ENCODE measurements at regions of chr21 and their contacts with region 1.

Region 1: DNA sequence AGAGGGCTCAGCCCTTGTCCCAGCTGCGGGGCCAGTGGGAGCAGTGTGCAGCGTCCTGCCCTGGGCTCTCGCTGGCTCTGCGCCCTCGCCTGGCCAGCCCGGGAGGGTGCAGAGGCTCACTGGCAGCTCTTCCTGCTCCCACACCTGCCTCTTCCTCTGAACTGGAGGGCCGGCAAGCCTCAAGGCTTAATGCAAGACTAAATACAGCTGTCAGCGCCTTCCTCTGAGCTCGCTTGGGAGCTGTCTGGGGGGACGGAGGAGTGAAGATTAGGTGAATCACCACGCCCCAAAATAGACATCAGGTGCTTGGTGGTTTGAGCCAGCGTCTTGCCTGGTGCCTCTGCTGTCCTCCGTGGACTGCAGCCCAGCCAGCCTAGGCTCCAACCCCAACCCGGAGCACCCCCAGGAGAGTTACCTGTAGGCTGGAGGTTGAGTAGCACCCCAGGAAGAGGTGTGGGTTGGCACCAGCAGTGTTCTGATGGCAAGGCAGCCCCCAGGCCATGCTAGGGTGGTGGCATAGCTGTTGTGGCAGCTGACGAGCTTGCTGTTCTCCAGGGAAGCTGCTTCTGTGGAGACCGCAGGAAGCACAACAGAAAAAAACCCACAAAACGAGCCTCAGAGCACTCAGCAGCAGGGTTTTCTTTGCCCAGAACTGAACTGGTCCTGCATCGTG is 36.9 kb downstream of the UMODL1 start:
- DNase-seq: peak; percentile 75
- ATAC-seq: peak; percentile 99
- H3K4me3 Mint-ChIP-seq: no peak overlapping the region
- H3K27ac Mint-ChIP-seq: no peak overlapping the region
- H3K4me1 Mint-ChIP-seq: peaks cover 5% of the 10 kb centered on the region
- H3K27me3 Mint-ChIP-seq: no peaks in the 10 kb centered on the region
- CTCF ChIP-seq: peak; percentile 90

Region 2: DNA sequence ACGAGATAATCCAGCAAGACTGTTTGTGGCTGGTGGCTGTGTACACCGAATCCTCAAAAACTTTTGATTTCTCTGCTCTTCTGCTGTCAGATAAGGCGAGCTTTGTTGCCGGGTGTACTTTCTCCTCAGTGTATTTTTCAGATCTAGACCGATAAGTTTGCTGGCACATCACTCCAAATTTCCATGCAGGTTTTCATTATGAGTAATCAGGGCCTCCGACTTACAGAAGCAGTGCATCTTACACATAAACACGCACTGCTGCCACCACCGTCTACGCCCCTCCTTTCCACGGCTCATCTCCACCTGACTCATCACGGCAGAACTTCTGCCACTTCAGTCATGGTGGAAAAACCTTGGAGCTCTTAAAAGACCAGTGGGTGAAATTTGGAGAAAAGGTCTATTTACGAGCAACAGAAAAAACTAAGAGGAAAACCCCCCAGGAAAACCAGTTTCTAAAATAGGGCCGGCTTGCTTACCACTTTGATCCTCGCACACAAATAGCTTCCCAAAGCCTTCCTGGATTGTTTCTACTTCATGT is 105.5 kb before region 1 on chr21:
- CTCF ChIA-PET with region 1: interaction called, 21 read pairs
- POLR2A ChIA-PET with region 1: no interaction called
- intact Hi-C with region 1: loop called (anchors 5 kb)
- DNase-seq: peak; percentile 87
- ATAC-seq: peak; percentile 90
- H3K4me3 Mint-ChIP-seq: peak overlapping the region; percentile 2
- H3K27ac Mint-ChIP-seq: peak overlapping the region; percentile 88
- H3K4me1 Mint-ChIP-seq: peaks cover 54% of the 10 kb centered on the region
- H3K27me3 Mint-ChIP-seq: no peaks in the 10 kb centered on the region
- CTCF ChIP-seq: no peak

Region 3: GRCh38 chr21:42062236-42063022 is 45.6 kb before region 1 on chr21:
- CTCF ChIA-PET with region 1: interaction called, 16 read pairs
- POLR2A ChIA-PET with region 1: no interaction called
- intact Hi-C with region 1: no loop called
- DNase-seq: peak; percentile 95
- ATAC-seq: peak; percentile 68
- H3K4me3 Mint-ChIP-seq: peak overlapping the region; percentile 71
- H3K27ac Mint-ChIP-seq: peak overlapping the region; percentile 95
- H3K4me1 Mint-ChIP-seq: peaks cover 44% of the 10 kb centered on the region
- H3K27me3 Mint-ChIP-seq: no peaks in the 10 kb centered on the region
- CTCF ChIP-seq: no peak

Region 4: DNA sequence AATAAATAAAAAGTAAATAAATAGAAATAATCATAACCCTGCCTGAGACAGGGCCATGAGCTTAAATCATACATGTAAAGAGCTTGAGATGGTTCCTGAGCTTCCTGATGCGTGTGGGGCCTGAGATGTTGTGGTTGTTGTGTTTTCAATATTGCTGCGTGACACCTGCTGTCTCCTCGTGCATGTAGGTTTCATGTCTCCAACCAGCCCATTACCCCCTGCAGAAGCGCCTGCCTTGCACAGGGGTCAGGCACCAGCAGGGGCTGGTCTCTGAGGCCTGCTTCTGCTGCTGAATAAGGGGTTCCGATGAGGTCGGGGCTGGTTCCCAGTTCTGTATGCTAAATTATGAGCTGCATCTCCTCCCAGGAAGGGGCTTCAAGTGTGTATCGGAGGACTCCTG is 21.0 kb before region 1 on chr21:
- CTCF ChIA-PET with region 1: interaction called, 16 read pairs
- POLR2A ChIA-PET with region 1: no interaction called
- intact Hi-C with region 1: no loop called
- DNase-seq: no peak
- ATAC-seq: no peak
- H3K4me3 Mint-ChIP-seq: no peak overlapping the region
- H3K27ac Mint-ChIP-seq: no peak overlapping the region
- H3K4me1 Mint-ChIP-seq: peaks cover 11% of the 10 kb centered on the region
- H3K27me3 Mint-ChIP-seq: no peaks in the 10 kb centered on the region
- CTCF ChIP-seq: no peak

Region 5: GRCh38 chr21:42164064-42164789 is 56.2 kb after region 1 on chr21:
- CTCF ChIA-PET with region 1: no interaction called
- POLR2A ChIA-PET with region 1: no interaction called
- intact Hi-C with region 1: no loop called
- DNase-seq: peak; percentile 78
- ATAC-seq: peak; percentile 66
- H3K4me3 Mint-ChIP-seq: no peak overlapping the region
- H3K27ac Mint-ChIP-seq: no peak overlapping the region
- H3K4me1 Mint-ChIP-seq: peaks cover 32% of the 10 kb centered on the region
- H3K27me3 Mint-ChIP-seq: no peaks in the 10 kb centered on the region
- CTCF ChIP-seq: peak; percentile 62

Region 6: GRCh38 chr21:42400525-42400924 is 292.5 kb after region 1 on chr21:
- CTCF ChIA-PET with region 1: no interaction called
- POLR2A ChIA-PET with region 1: no interaction called
- intact Hi-C with region 1: no loop called
- DNase-seq: no peak
- ATAC-seq: peak; percentile 20
- H3K4me3 Mint-ChIP-seq: peak overlapping the region; percentile 55
- H3K27ac Mint-ChIP-seq: peak overlapping the region; percentile 82
- H3K4me1 Mint-ChIP-seq: peaks cover 53% of the 10 kb centered on the region
- H3K27me3 Mint-ChIP-seq: no peaks in the 10 kb centered on the region
- CTCF ChIP-seq: no peak